K562 (cell line): ENCODE measurements at regions of chr5 and their contacts with region 1.

Region 1: DNA sequence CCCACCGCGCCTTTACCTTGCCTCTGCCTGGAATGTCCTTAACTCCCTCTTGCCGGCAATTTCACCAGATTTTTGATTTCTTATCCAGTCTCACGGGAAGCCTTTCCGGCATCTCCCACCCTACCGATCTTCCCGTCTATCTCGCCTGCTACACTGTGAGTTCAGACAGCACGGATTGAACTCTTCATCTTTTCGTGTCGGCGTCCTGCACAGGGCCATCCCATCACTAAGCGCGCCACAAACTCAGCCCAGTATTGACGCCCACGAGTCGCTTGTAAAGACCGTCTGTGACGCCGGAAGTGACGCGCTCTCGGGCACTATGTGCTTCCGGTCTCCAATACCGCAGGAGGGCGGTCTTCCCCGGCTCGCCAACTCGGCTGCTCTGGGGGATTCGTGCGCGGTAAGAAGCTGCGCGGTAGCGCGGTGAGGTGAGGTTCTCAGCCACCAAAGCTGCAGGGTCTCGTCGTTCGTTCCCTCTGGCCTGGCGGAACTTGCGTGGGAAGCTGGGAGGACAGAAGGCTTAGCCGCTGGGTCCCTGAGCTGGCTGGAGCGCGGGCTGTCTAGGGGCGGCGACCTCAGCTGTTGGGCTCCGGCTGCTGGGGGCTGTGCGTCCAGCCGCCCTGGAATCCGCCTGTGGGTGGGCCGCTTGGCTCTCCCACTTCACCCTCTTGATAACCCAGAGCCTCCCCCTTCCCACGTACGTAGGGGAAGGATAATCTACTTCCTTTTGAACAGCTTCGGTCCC is at the start of gene ZCCHC9:
- DNase-seq: peak; percentile 80 to 97 (median 85)
- ATAC-seq: peak; percentile 92
- H3K4me3 ChIP-seq: peak within 1 kb of the TSS; percentile 76
- H3K27ac ChIP-seq: peak within 1 kb of the TSS; percentile 93
- H3K4me1 ChIP-seq: peaks cover 3 to 8% of the 10 kb centered on the region in 2 experiments
- H3K27me3 ChIP-seq: no peaks in the 10 kb centered on the region
- CTCF ChIP-seq: peak; percentile 38 to 44 (median 39); a peak in 3 of 6 replicates
- EP300 ChIP-seq: peak; percentile 40; the same call in 1 of the 2 replicates
- POLR2A ChIP-seq: peak; percentile 96
- RAD21 ChIP-seq: no peak
- polyA plus RNA-seq, gene ZCCHC9: 77.1 to 95.3 TPM

Region 2: DNA sequence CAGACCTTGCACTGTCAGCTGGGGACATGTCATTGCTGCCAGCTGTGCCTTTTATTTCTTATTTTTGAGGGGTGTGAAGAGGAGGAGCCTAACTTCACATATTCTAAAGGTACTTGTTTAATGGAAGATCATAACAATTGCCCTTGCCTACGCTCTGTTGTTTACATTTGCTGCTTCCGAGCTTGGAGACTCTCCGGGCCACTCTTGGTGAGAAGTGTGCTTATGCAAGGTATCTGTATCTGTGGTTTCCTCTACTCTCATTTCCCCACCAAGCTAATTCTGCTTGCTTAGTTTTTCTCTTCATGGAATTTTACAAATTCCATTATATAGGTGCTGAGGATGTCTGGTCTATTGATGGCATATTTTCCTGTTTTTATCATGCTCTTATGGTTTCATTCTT is 236.0 kb before region 1 on chr5:
- CTCF ChIA-PET with region 1: no interaction called
- POLR2A ChIA-PET with region 1: no interaction called
- in situ Hi-C with region 1: no loop called
- intact Hi-C with region 1: no loop called
- DNase-seq: no peak
- ATAC-seq: no peak
- H3K4me3 ChIP-seq: no peak overlapping the region
- H3K27ac ChIP-seq: no peak overlapping the region
- H3K4me1 ChIP-seq: no peaks in the 10 kb centered on the region
- H3K27me3 ChIP-seq: peaks cover 5 to 16% of the 10 kb centered on the region in 2 experiments; a peak in 4 of 5 replicates
- CTCF ChIP-seq: no peak
- EP300 ChIP-seq: no peak
- POLR2A ChIP-seq: no peak
- RAD21 ChIP-seq: no peak

Region 3: GRCh38 chr5:81125959-81126358 is 175.5 kb before region 1 on chr5:
- CTCF ChIA-PET with region 1: no interaction called
- POLR2A ChIA-PET with region 1: no interaction called
- in situ Hi-C with region 1: no loop called
- intact Hi-C with region 1: no loop called
- DNase-seq: no peak
- ATAC-seq: no peak
- H3K4me3 ChIP-seq: no peak overlapping the region
- H3K27ac ChIP-seq: no peak overlapping the region
- H3K4me1 ChIP-seq: no peaks in the 10 kb centered on the region
- H3K27me3 ChIP-seq: peaks cover 13 to 25% of the 10 kb centered on the region in 2 experiments
- CTCF ChIP-seq: no peak
- EP300 ChIP-seq: no peak
- POLR2A ChIP-seq: no peak
- RAD21 ChIP-seq: no peak

Region 4: DNA sequence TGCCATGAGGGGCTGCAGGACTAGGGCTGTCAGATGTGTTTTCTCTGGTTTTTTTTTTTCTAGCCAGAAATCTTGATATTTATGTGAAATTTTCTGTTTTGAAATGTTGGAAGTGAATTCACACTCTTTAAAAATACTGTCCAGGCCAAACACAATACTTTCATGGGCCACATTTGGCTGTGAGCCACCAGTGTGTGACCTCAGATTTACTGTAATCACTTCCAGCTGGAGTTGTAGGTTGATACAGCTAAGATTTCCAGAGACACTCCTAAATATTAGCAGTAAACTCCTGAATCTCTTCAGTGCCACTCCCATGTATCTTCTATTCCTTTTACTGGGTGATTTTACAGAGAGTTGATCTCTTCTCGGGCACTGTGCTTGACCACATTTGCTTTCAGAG is 160.5 kb before region 1 on chr5:
- CTCF ChIA-PET with region 1: no interaction called
- POLR2A ChIA-PET with region 1: no interaction called
- in situ Hi-C with region 1: no loop called
- intact Hi-C with region 1: no loop called
- DNase-seq: no peak
- ATAC-seq: no peak
- H3K4me3 ChIP-seq: no peak overlapping the region
- H3K27ac ChIP-seq: no peak overlapping the region
- H3K4me1 ChIP-seq: no peaks in the 10 kb centered on the region
- H3K27me3 ChIP-seq: peaks cover 8 to 14% of the 10 kb centered on the region in 2 experiments; a peak in 2 of 5 replicates
- CTCF ChIP-seq: no peak
- EP300 ChIP-seq: no peak
- POLR2A ChIP-seq: no peak
- RAD21 ChIP-seq: no peak

Region 5: DNA sequence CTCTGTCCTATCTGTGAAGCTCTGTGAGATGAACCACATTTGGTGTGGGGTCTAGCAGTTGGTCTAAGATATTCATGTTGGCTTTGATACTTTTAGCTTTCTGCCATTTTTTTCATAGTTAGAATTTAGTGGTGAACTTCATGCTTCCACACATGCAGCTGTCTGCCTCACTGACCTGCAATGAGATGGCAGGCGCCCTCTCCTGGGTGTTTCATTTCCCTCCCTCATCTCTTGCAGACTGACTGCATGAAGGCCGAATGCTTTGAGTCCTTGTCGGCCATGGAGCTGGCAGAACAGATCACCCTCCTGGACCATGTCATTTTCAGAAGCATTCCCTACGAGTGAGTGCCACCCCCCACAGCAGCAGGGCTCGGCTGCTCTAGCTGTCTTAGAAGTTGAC is 94.4 kb before region 1 on chr5:
- CTCF ChIA-PET with region 1: no interaction called
- POLR2A ChIA-PET with region 1: interaction called, 3 read pairs
- in situ Hi-C with region 1: no loop called
- intact Hi-C with region 1: loop called (anchors 5 kb)
- DNase-seq: peak; percentile 17 to 29 (median 22)
- ATAC-seq: peak; percentile 83
- H3K4me3 ChIP-seq: no peak overlapping the region
- H3K27ac ChIP-seq: no peak overlapping the region
- H3K4me1 ChIP-seq: no peaks in the 10 kb centered on the region
- H3K27me3 ChIP-seq: peaks cover 37 to 54% of the 10 kb centered on the region in 2 experiments
- CTCF ChIP-seq: peak; percentile 26 to 43 (median 29); a peak in 4 of 6 replicates
- EP300 ChIP-seq: no peak
- POLR2A ChIP-seq: no peak
- RAD21 ChIP-seq: no peak; a peak in 1 of 4 replicates

Region 6: DNA sequence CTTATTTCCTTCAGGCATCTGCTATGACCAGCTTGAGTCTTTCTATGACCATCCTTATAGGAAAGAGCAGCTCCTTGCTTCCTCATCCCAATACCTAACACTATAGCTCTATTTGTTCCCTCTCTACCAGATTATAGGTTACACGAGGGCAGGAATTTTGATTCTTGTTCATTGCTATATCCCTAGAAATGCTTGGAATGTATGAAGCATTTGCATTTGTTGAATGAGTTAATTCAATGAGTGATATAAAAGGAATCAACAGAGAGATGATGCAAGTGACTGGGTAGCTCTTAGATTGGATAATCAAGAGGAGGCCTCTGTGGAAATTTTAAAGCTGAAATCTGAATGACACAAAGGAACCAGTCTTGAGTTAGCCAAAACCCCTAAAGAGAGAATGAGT is 13.9 kb after region 1 on chr5:
- CTCF ChIA-PET with region 1: no interaction called
- POLR2A ChIA-PET with region 1: interaction called, 10 read pairs
- in situ Hi-C with region 1: no loop called
- intact Hi-C with region 1: no loop called
- DNase-seq: no peak
- ATAC-seq: no peak
- H3K4me3 ChIP-seq: no peak overlapping the region
- H3K27ac ChIP-seq: no peak overlapping the region
- H3K4me1 ChIP-seq: no peaks in the 10 kb centered on the region
- H3K27me3 ChIP-seq: no peaks in the 10 kb centered on the region
- CTCF ChIP-seq: no peak
- EP300 ChIP-seq: no peak
- POLR2A ChIP-seq: no peak
- RAD21 ChIP-seq: no peak

Region 7: DNA sequence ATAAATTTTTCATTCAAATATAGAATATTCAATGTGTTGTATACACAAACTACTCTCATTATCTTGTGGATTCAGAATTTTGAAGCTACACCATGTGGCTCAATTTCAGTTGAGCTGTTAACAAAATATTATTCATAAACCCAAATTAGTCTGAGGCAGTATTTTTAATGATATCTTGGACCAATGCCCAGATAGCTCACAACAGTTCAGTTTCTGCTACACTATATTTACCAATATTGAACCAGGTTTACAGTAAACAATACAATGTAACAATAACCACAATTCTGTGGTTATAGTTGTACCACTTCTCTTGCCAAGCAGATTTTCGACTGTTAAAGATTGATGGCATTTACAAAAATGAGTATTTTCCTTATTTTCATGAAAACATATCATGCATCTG is 349.5 kb after region 1 on chr5:
- CTCF ChIA-PET with region 1: no interaction called
- POLR2A ChIA-PET with region 1: no interaction called
- in situ Hi-C with region 1: no loop called
- intact Hi-C with region 1: no loop called
- DNase-seq: no peak
- ATAC-seq: no peak
- H3K4me3 ChIP-seq: no peak overlapping the region
- H3K27ac ChIP-seq: no peak overlapping the region
- H3K4me1 ChIP-seq: no peaks in the 10 kb centered on the region
- H3K27me3 ChIP-seq: no peaks in the 10 kb centered on the region
- CTCF ChIP-seq: no peak
- EP300 ChIP-seq: no peak
- POLR2A ChIP-seq: no peak
- RAD21 ChIP-seq: no peak